AG04450 (cell line): ENCODE measurements at regions of chr2 and their contacts with region 1.

Region 1: DNA sequence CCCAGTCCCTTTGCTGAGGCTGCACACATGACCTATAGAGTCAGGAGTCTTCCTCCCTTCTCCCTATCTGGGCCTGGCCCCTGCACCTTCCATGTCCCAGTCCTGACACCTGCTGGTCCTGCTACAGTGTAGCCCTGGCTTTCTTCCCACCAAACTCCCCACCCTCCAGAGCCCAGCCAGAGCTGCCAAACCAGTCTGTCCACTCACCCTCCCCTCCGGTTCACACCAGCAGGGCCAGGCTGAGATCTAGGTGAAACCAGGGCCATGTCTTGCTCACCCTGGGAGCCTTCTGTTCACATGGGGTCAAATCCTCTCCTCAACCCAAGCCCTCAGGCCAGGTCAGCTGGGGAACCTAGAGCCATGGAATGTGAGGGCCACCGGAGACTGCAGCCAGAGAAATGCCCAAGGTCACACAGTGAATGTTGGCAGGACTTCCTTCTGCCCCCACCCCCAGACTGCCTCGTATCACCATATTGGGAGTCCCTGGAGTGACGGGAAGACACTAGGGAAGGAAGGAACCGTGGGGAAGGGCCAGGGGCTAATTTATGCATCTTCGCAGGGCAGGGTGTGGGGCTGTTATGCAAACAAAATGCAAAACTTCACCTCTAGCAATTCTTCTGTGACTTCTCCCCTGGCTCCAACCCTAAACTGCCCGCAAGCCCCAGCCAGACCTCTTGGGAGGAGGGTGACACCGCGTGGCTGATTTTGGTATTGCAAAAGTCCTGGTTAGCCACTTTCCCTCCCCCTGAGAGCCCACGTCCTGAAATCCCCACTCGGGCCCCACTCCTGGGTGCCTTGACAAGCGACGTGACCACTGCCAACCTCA is 14.6 kb downstream of the TNS1 start:
- DNase-seq: no peak
- H3K4me3 ChIP-seq: no peak overlapping the region
- H3K27ac ChIP-seq: no peak overlapping the region
- H3K27me3 ChIP-seq: no peaks in the 10 kb centered on the region
- CTCF ChIP-seq: peak; percentile 93

Region 2: DNA sequence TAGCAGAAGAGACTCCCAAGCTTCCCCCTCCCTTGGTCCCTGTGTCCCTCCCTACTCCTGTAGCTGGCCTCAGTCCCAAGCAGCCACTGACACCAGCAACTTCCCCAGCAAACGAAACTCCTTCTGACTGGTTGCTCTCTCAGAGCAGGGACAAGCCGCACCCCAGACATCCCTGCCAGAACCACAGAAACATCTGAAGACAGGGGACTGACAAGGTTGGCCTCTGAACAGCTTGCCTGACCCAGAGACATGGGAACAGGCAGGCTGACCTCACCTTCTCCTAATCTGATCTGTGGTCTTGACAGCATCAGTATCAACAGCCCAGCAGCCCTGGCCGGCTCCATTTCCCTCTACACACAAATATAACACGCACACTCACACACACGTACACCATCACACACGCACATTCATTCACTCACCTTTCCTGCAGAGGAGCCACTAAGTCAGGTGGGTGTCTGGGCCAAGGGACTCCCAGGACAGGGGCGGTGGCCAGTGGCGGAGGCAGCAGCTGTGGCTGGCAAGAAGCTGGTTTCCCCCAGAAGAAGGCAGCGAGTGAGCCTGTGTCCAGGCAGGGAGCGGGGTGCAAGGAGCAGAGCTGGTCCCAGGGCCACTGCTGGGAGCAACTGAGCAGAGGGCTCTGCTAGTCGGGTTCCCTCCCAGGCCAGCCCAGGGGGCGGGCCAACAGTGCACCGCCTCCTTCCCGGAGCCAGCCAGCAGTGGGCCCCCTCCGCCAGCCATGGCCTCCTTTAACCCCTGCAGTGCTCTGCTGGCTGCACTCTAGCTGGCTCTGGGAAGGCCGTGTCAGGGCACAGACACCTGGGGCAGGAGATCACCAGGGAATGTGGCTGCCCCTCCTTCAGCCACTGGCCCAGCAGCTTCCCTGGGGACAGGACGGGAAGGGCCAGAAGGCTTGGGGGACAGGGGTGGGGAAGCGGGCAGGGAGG is 44.5 kb before region 1 on chr2:
- CTCF ChIA-PET with region 1: interaction called, 10 read pairs
- POLR2A ChIA-PET with region 1: no interaction called
- DNase-seq: no peak
- H3K4me3 ChIP-seq: peak overlapping the region; percentile 64
- H3K27ac ChIP-seq: no peak overlapping the region
- H3K27me3 ChIP-seq: no peaks in the 10 kb centered on the region
- CTCF ChIP-seq: peak; percentile 34

Region 3: GRCh38 chr2:217964275-217965161 is 23.7 kb before region 1 on chr2:
- CTCF ChIA-PET with region 1: interaction called, 3 read pairs
- POLR2A ChIA-PET with region 1: interaction called, 10 read pairs
- DNase-seq: no peak
- H3K4me3 ChIP-seq: no peak overlapping the region
- H3K27ac ChIP-seq: peak overlapping the region; percentile 47
- H3K27me3 ChIP-seq: no peaks in the 10 kb centered on the region
- CTCF ChIP-seq: no peak

Region 4: GRCh38 chr2:218710687-218711549 is 722.7 kb after region 1 on chr2 and contains the start of gene TTLL4:
- CTCF ChIA-PET with region 1: no interaction called
- POLR2A ChIA-PET with region 1: no interaction called
- DNase-seq: peak; percentile 88
- H3K4me3 ChIP-seq: peak within 1 kb of the TSS; percentile 91
- H3K27ac ChIP-seq: peak within 1 kb of the TSS; percentile 87
- H3K27me3 ChIP-seq: no peaks in the 10 kb centered on the region
- CTCF ChIP-seq: peak; percentile 74
- polyA plus RNA-seq, gene TTLL4: 16.3 and 18.0 TPM in 2 replicates